GM10248 (cell line): ENCODE measurements at regions of chr1 and their contacts with region 1.

Region 1: GRCh38 chr1:44049839-44050238 is 18.6 kb upstream of the SLC6A9 start:
- DNase-seq: no peak
- CTCF ChIP-seq: no peak

Region 2: DNA sequence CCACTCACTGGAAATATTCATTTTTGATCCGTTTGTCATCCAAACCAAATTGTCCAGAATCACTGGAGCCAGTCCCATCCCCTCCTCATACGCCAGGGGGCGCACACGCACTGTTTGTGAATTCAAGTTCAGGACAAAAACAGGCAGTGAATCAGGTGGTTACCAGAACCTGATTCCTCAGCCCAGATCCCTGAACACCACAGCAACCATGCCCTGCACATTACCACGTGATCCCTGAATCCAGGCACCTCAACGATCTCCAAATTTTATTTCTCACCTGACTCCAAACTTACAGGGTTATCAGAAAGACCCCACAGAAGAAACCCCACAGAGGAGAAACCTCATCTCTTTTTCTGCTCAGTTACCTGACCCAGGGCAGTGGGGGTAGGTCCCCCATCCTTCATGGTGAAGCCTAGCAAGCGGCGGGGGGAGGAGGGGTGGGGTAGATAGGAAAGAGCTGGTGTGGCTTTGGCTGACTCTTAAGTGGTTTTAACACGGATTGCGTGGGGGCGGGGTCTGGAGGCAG is 520.6 kb before region 1 on chr1:
- CTCF ChIA-PET with region 1: interaction called, 25 read pairs
- POLR2A ChIA-PET with region 1: no interaction called
- DNase-seq: peak; percentile 83
- CTCF ChIP-seq: peak; percentile 96

Region 3: DNA sequence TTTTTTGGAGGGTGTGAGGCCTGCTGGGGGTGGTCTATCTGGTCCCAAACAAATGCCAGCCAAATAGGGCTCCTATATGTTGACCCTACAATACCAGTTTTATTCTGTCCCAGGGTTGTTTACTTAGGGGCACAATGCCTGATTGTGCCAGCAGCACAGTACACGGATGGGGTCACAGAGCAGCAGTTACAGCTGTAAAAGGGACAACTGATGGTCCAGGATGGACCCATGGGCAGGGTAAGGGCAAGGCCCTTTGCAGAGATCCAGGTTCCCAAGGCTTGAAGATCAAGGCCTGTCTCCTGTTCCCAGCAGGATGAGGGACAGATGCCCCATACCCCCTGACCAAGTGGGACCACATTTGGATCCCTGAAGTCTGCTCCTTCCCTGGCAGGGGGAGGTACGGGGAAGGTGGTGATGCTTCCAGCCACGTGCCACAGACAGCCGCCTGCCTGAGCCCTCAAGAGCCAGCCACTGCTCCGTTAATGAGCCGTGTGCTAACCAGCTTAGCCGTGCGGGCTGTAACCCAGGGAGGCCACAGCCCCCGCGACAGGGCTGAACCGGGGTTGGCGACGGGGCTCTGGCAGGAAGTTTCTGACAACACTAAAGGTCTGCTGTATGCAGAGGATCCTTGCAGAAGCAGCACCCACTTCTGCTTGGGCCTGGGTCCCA is 36.8 kb before region 1 on chr1:
- CTCF ChIA-PET with region 1: interaction called, 13 read pairs
- POLR2A ChIA-PET with region 1: no interaction called
- DNase-seq: no peak
- CTCF ChIP-seq: no peak

Region 4: GRCh38 chr1:44029906-44030604 is 19.8 kb before region 1 on chr1:
- CTCF ChIA-PET with region 1: interaction called, 94 read pairs
- POLR2A ChIA-PET with region 1: no interaction called
- DNase-seq: peak; percentile 92
- CTCF ChIP-seq: no peak

Region 5: GRCh38 chr1:44068442-44068921 is 18.6 kb after region 1 on chr1:
- CTCF ChIA-PET with region 1: interaction called, 19 read pairs
- POLR2A ChIA-PET with region 1: no interaction called
- DNase-seq: peak; percentile 34
- CTCF ChIP-seq: no peak